Common myeloid progenitor, CD34-positive (primary cell): ENCODE measurements at regions of chr3 and their contacts with region 1.

Region 1: GRCh38 chr3:186617038-186617946 is 4.4 kb downstream of the AHSG start:
- DNase-seq: peak; percentile 92 to 96 (median 93)
- H3K4me3 ChIP-seq: peak overlapping the region in 3 of 7 experiments; percentile 11 to 63 (median 50)
- H3K27ac ChIP-seq: no peak overlapping the region
- H3K4me1 ChIP-seq: peaks cover 0 to 17% (median 11%) of the 10 kb centered on the region in 4 experiments
- H3K27me3 ChIP-seq: peaks cover 0 to 17% (median 10%) of the 10 kb centered on the region in 5 experiments

Region 2: DNA sequence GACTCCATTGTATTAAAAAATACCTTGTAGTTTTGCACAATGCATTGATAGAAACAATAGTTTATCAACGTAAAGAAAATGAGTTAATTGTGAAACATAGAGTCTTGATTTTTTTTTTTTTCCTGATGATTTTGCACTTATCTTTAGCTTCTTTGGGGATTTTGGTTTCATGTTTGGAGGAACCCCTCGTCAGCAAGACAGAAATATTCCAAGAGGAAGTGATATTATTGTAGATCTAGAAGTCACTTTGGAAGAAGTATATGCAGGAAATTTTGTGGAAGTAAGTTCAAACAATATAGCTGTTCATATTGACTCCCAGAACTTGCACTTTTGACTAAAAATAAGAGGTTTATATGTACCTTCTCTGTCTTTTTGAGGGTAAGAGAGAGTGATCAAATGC is 39.8 kb before region 1 on chr3:
- CTCF ChIA-PET with region 1: interaction called, 14 read pairs
- POLR2A ChIA-PET with region 1: interaction called, 4 read pairs
- DNase-seq: no peak
- H3K4me3 ChIP-seq: no peak overlapping the region
- H3K27ac ChIP-seq: no peak overlapping the region
- H3K4me1 ChIP-seq: no peaks in the 10 kb centered on the region
- H3K27me3 ChIP-seq: no peaks in the 10 kb centered on the region

Region 3: DNA sequence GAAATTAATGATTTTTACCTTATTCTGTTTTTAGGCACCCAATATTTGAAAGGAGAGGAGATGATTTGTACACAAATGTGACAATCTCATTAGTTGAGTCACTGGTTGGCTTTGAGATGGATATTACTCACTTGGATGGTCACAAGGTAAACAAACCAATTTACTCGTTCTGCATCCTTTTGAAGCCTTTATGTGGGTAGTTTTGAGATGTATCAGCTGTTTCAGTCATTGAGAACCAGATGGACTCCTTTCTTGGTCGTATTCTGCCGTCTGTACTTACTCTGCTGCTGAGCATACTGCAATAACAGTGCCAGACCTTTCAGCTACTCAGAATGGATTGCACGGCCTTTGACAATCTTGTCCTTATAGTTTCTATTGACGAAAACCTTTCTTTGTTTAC is 33.5 kb before region 1 on chr3:
- CTCF ChIA-PET with region 1: interaction called, 30 read pairs
- POLR2A ChIA-PET with region 1: interaction called, 4 read pairs
- DNase-seq: no peak
- H3K4me3 ChIP-seq: no peak overlapping the region
- H3K27ac ChIP-seq: no peak overlapping the region
- H3K4me1 ChIP-seq: no peaks in the 10 kb centered on the region
- H3K27me3 ChIP-seq: no peaks in the 10 kb centered on the region

Region 4: DNA sequence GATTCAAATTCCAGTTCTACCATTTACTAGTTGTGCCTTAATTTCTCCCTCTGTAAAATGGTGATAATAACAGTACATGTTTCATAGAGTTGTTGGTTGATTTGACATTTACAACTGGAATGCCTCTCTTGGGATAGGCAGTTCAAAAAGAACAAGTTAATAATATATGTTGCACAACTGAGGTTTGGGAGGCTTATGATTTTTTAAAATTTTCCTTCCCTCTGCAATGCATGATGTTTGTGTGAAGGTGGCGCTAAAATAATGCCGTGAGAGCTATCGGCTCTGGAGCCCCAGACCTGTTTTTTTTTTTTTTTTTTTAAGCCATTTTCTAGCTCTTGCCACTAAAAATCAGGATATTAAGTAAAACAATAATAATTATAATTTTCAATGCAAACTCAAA is 28.2 kb before region 1 on chr3:
- CTCF ChIA-PET with region 1: interaction called, 30 read pairs
- POLR2A ChIA-PET with region 1: interaction called, 3 read pairs
- DNase-seq: peak; percentile 33 to 64 (median 64)
- H3K4me3 ChIP-seq: no peak overlapping the region
- H3K27ac ChIP-seq: no peak overlapping the region
- H3K4me1 ChIP-seq: no peaks in the 10 kb centered on the region
- H3K27me3 ChIP-seq: no peaks in the 10 kb centered on the region

Region 5: GRCh38 chr3:186598108-186598784 is 19.0 kb before region 1 on chr3:
- CTCF ChIA-PET with region 1: interaction called, 59 read pairs
- POLR2A ChIA-PET with region 1: no interaction called
- DNase-seq: no peak
- H3K4me3 ChIP-seq: no peak overlapping the region
- H3K27ac ChIP-seq: no peak overlapping the region
- H3K4me1 ChIP-seq: no peaks in the 10 kb centered on the region
- H3K27me3 ChIP-seq: no peaks in the 10 kb centered on the region

Region 6: GRCh38 chr3:186750316-186750715 is 133.0 kb after region 1 on chr3:
- CTCF ChIA-PET with region 1: no interaction called
- POLR2A ChIA-PET with region 1: no interaction called
- DNase-seq: no peak
- H3K4me3 ChIP-seq: no peak overlapping the region
- H3K27ac ChIP-seq: no peak overlapping the region
- H3K4me1 ChIP-seq: peaks cover 0 to 10% (median 4%) of the 10 kb centered on the region in 4 experiments
- H3K27me3 ChIP-seq: no peaks in the 10 kb centered on the region

Region 7: GRCh38 chr3:186783073-186783730 is 165.9 kb after region 1 on chr3 and contains the start of gene EIF4A2:
- CTCF ChIA-PET with region 1: interaction called, 12 read pairs
- POLR2A ChIA-PET with region 1: no interaction called
- DNase-seq: peak; percentile 92 to 94 (median 94)
- H3K4me3 ChIP-seq: peak within 1 kb of the TSS; percentile 93 to 100 (median 97)
- H3K27ac ChIP-seq: peak within 1 kb of the TSS; percentile 97 to 98
- H3K4me1 ChIP-seq: peaks cover 18 to 38% (median 32%) of the 10 kb centered on the region in 4 experiments
- H3K27me3 ChIP-seq: no peaks in the 10 kb centered on the region

Region 8: DNA sequence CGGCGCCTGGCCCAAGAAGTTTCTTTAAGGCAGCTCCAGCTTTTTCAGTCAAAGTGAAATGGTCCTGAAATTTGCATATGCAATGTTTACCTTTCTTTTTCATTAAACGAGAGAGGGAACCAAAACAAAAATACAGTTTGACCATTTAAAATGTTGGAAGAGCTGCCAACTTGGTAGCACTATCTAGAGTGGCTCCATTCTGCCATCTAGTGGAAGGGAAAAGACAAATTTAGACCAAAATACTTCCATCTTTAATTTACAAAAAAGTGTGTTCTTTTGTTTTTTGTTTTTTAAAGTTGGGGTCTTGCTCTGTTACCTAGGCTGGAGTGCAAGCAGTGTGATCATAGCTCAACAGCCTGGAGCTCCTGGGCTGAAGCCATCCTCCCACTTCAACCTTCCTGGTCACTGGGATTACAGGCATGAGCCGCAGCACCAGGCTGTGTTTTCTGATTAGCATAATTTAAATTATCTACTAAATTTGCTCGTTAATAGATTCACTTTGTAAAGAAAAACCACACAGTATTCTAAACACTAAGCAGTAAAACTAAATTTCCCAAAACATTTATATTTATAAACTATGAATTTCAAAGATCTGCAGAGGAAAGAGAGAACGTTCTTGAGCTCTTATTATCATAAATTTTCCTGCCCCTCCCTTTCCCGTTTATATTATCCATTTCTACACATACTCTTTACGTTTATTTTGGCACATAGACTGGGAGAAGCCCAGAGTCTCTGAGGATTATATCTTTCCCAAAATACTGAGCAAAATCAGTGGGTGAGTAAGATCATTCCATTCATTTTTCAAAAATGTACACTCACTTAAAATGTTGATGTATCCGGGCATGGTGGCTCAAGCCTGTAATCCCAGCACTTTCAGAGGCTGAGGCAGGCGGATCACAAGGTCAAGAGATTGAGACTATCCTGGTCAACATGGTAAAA is 204.4 kb after region 1 on chr3:
- CTCF ChIA-PET with region 1: interaction called, 78 read pairs
- POLR2A ChIA-PET with region 1: no interaction called
- DNase-seq: peak; percentile 64 to 79 (median 67)
- H3K4me3 ChIP-seq: no peak overlapping the region
- H3K27ac ChIP-seq: no peak overlapping the region
- H3K4me1 ChIP-seq: peaks cover 0 to 22% (median 19%) of the 10 kb centered on the region in 4 experiments
- H3K27me3 ChIP-seq: peaks cover 4 to 33% (median 17%) of the 10 kb centered on the region in 5 experiments